Psoas muscle (tissue), 8 donors: ENCODE measurements at regions of chr12 and their contacts with region 1.

Region 1: GRCh38 chr12:40152783-40153383 is 47.0 kb upstream of the SLC2A13 start:
- DNase-seq: peak in 1 of 2 donors; percentile 54
- ATAC-seq: peak in 2 of 4 donors; percentile 46 to 74
- H3K4me3 ChIP-seq: no peak overlapping the region
- H3K27ac ChIP-seq: no peak overlapping the region
- H3K4me1 ChIP-seq: no peaks in the 10 kb centered on the region
- H3K27me3 ChIP-seq: no peaks in the 10 kb centered on the region
- CTCF ChIP-seq: peak; percentile 78

Region 2: DNA sequence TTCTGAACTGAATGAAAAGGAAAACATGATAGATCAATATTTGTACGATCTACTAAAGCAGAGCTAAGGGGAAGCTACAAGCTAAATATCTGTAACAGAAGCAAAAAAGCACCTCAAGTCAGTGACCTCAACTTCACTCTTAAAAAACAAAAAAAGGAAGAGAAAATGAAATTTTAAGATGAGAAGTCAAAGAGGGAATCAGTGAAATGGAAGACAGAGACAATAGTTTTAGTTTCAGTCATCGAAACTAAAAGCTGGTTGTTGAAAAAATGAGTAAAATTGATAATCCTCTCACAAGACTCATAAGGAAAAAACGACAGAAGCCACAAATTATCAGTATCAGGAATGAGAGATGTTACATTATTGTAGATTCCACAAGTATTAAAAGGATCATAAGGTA is 35.1 kb before region 1 on chr12:
- intact Hi-C with region 1: no loop called
- DNase-seq: no peak
- ATAC-seq: no peak
- H3K4me3 ChIP-seq: no peak overlapping the region
- H3K27ac ChIP-seq: no peak overlapping the region
- H3K4me1 ChIP-seq: no peaks in the 10 kb centered on the region
- H3K27me3 ChIP-seq: no peaks in the 10 kb centered on the region
- CTCF ChIP-seq: no peak

Region 3: DNA sequence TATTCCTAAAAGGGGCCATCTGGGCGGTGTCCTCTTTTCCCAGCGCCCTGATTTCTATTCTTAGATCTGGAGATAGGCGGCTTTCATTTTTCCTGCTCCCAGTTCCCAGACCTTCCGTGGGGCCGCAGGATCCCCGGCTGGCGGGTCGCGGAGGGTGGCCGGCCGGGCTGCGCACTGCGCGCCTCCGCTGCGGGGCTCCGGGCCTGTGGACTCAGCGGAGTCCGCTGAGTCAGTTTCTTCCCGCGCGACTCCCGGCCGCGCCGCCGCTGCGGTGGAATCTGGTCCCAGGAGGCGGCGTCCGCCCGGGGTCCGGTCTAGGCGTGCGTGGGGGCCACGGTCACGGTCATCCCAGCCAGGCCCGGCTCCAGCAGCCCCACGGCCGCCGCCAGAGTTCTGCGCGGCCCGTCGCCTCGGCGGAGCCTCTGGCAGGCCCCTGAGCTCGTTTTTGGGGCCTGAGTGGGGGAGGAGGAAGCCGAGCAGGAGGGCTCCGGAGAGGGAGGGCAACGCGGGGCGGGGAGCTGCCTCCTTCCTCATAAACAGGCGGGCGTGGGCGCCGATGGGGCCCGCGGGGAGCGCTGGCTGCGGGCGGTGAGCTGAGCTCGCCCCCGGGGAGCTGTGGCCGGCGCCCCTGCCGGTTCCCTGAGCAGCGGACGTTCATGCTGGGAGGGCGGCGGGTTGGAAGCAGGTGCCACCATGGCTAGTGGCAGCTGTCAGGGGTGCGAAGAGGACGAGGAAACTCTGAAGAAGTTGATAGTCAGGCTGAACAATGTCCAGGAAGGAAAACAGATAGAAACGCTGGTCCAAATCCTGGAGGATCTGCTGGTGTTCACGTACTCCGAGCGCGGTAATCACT is 71.8 kb after region 1 on chr12 and contains the start of gene LRRK2:
- intact Hi-C with region 1: loop called (anchors 5 to 10 kb)
- DNase-seq: peak; percentile 84 to 92
- ATAC-seq: peak; percentile 87 to 92 (median 88)
- H3K4me3 ChIP-seq: peak within 1 kb of the TSS; percentile 82
- H3K27ac ChIP-seq: peak within 1 kb of the TSS; percentile 93
- H3K4me1 ChIP-seq: peaks cover 16% of the 10 kb centered on the region
- H3K27me3 ChIP-seq: no peaks in the 10 kb centered on the region
- CTCF ChIP-seq: no peak
- total RNA-seq, gene LRRK2: 4.7 to 8.4 (median 6.8) TPM

Region 4: GRCh38 chr12:40261937-40262336 is 109.1 kb after region 1 on chr12:
- intact Hi-C with region 1: no loop called
- DNase-seq: no peak
- ATAC-seq: no peak
- H3K4me3 ChIP-seq: no peak overlapping the region
- H3K27ac ChIP-seq: no peak overlapping the region
- H3K4me1 ChIP-seq: no peaks in the 10 kb centered on the region
- H3K27me3 ChIP-seq: no peaks in the 10 kb centered on the region
- CTCF ChIP-seq: no peak

Region 5: GRCh38 chr12:40312982-40313576 is 160.2 kb after region 1 on chr12:
- intact Hi-C with region 1: loop called in 1 of 2 experiments (anchors 10 kb)
- DNase-seq: no peak
- ATAC-seq: no peak
- H3K4me3 ChIP-seq: no peak overlapping the region
- H3K27ac ChIP-seq: no peak overlapping the region
- H3K4me1 ChIP-seq: no peaks in the 10 kb centered on the region
- H3K27me3 ChIP-seq: no peaks in the 10 kb centered on the region
- CTCF ChIP-seq: peak; percentile 34